ENCODE measurements at regions of chr11 and their contacts with region 1.

Region 1: DNA sequence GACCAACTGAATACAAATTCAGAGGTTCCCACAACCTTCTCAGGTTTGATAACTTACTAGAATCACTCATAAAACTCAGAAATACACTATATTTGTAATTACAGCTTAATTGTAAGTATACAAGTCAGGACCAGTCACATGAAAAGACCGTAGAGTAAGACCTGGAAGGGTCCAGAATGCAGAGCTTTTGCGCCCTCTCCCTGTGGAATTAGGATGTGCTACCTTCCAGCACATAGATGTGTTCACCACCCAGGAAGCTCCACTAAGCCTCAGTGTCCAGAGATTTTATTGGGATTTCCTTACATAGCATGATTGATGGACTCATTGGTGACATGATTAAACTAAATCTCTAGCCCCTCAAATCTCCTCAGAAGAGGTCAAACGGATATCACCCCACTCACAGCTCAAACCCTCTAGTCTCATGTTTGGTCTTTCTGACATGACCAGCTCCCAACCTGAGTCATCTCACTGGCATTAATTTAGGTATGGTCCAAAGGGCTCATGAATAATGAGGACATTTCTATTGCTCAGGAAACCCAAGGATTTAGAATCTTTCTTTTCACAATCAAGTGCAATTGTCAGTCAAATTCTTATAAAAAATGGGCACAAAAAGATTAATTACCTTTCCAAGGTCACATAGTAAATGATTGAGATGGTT is 77.2 kb upstream of the UBASH3B start:
- DNase-seq: no peak
- ATAC-seq: no peak
- H3K4me3 ChIP-seq: no peak overlapping the region
- H3K27ac ChIP-seq: no peak overlapping the region
- H3K4me1 ChIP-seq: no peaks in the 10 kb centered on the region
- H3K27me3 ChIP-seq: no peaks in the 10 kb centered on the region
- CTCF ChIP-seq: peak in 1 of 3 experiments; percentile 16; a peak in 1 of 6 replicates
- EP300 ChIP-seq: no peak
- POLR2A ChIP-seq: no peak
- RAD21 ChIP-seq: no peak

Region 2: GRCh38 chr11:122215244-122215992 is 362.9 kb before region 1 on chr11:
- CTCF ChIA-PET with region 1: no interaction called
- POLR2A ChIA-PET with region 1: no interaction called
- RAD21 ChIA-PET with region 1: no interaction called
- SMC1A ChIA-PET with region 1: no interaction called
- in situ Hi-C with region 1: no loop called
- intact Hi-C with region 1: no loop called
- DNase-seq: no peak
- ATAC-seq: peak; percentile 97
- H3K4me3 ChIP-seq: no peak overlapping the region
- H3K27ac ChIP-seq: no peak overlapping the region
- H3K4me1 ChIP-seq: no peaks in the 10 kb centered on the region
- H3K27me3 ChIP-seq: no peaks in the 10 kb centered on the region
- CTCF ChIP-seq: peak; percentile 82 to 94 (median 89)
- EP300 ChIP-seq: no peak
- POLR2A ChIP-seq: no peak
- RAD21 ChIP-seq: peak; percentile 46

Region 3: GRCh38 chr11:122592641-122593040 is 14.3 kb after region 1 on chr11:
- CTCF ChIA-PET with region 1: interaction called, 18 read pairs
- POLR2A ChIA-PET with region 1: interaction called, 4 read pairs
- RAD21 ChIA-PET with region 1: no interaction called
- SMC1A ChIA-PET with region 1: no interaction called
- in situ Hi-C with region 1: no loop called
- intact Hi-C with region 1: no loop called
- DNase-seq: no peak
- ATAC-seq: no peak
- H3K4me3 ChIP-seq: no peak overlapping the region
- H3K27ac ChIP-seq: no peak overlapping the region
- H3K4me1 ChIP-seq: no peaks in the 10 kb centered on the region
- H3K27me3 ChIP-seq: no peaks in the 10 kb centered on the region
- CTCF ChIP-seq: no peak
- EP300 ChIP-seq: no peak
- POLR2A ChIP-seq: no peak
- RAD21 ChIP-seq: no peak

Region 4: GRCh38 chr11:122628810-122629555 is 50.7 kb after region 1 on chr11:
- CTCF ChIA-PET with region 1: interaction called, 13 read pairs
- POLR2A ChIA-PET with region 1: no interaction called
- RAD21 ChIA-PET with region 1: interaction called, 3 read pairs
- SMC1A ChIA-PET with region 1: interaction called, 4 read pairs
- in situ Hi-C with region 1: no loop called
- intact Hi-C with region 1: no loop called
- DNase-seq: no peak
- ATAC-seq: peak; percentile 95
- H3K4me3 ChIP-seq: no peak overlapping the region
- H3K27ac ChIP-seq: no peak overlapping the region
- H3K4me1 ChIP-seq: no peaks in the 10 kb centered on the region
- H3K27me3 ChIP-seq: no peaks in the 10 kb centered on the region; a peak in 2 of 4 replicates
- CTCF ChIP-seq: peak; percentile 76 to 81 (median 80)
- EP300 ChIP-seq: no peak
- POLR2A ChIP-seq: no peak
- RAD21 ChIP-seq: peak; percentile 84

Measured in GM12878 (cell line).